HepG2 (cell line): ENCODE measurements at regions of chr12 and their contacts with region 1.

Region 1: DNA sequence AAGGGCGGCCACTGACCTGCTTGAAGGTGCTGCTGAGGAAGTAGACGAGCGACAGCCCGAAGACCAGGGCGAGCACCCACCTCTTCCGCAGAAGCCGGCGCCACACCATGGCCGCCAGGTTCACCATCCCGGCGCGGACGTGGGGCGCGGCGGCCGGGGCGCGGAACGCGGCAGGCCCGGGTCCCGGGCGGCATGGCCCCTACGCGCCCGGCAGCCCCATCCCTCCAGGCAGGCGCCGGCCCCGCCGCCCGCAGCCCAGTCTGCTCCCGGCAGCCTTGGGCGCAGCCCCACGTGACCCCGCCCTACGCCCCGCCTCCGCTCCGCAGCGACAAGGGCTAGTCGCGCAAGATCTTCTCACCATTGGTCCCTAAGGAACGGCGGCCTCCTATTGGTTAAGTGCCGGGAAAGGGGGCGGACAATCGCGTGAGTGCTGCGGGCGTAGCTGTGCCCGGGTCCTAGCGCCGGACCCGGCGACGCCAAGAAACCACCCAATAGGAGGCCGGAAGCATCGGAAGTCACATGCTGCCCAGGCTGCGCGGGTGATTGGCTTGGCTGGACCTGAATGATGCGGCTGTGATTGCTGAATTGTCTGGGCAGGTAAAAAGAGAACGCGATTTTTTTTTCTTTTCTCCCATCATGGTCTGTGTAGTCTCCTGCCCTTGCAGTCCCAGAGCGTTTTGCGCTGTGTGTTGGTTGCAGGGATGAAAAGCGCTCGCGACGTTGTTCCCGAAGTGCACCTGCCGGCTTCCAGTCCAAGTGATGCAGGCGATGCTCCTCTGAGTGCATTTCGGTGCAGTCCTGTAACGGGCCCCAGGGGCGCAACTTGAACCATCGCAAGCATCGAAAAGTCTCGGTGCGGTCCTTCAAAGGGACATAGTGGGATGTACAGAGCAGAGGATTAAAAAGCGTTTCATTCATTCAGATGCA is at the starts of genes RNFT2 and SPRING1:
- DNase-seq: peak; percentile 98
- ATAC-seq: peak; percentile 95
- H3K4me3 ChIP-seq: peak within 1 kb of the TSS; percentile 76 to 97 (median 89)
- H3K27ac ChIP-seq: peak within 1 kb of the TSS; percentile 63
- H3K4me1 ChIP-seq: peaks cover 44% of the 10 kb centered on the region
- H3K27me3 ChIP-seq: no peaks in the 10 kb centered on the region; a peak in 1 of 5 replicates
- CTCF ChIP-seq: no peak
- EP300 ChIP-seq: no peak
- POLR2A ChIP-seq: peak; percentile 64 to 80; a peak in 3 of 4 replicates
- RAD21 ChIP-seq: peak; percentile 58
- total RNA-seq, gene RNFT2: 7.1 and 8.3 TPM in 2 replicates
- total RNA-seq, gene SPRING1: 51.8 and 65.6 TPM in 2 replicates

Region 2: DNA sequence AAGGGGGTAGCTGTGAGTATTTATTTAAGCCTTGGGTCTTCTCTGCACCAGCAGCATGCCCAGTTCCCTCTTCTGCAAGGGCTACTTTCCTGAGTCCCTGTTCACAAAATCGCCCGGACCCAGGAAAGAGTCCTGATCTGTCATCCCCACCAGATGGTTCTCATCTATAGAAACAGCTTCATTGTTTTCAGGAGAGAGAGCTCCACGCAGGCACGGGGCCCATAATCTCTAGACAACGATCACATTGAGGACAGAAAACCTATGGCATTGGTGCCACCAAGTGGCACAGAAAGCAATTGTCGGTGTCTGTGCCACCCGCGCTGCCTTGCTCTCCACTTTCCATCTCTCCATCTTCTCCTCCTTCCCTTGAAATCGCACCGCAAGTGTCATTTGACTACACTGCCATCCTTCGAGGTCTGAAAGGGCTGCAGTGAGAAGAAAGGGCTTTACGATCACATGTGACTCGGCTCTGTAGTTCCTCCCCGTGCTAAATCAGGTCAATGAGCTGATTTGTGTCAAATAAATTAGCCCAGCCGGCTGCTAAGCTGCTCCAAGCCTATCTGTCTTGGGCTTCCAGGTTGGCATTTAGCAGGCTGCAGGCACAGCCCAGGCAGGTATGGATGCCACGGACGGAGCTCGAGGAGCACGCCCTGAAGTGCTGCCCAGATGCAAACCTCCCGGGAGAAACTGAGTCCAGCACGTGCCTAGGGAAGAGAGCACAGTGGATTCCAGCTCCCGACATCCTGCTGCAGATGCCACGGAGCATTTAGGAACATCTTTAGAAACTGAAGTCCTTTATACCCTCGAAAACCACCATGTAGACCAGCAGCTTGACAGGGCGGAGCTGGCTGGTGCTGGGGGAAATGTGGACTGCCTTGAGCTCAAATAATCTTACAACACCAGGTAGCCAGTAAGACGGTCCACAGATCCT is 28.9 kb before region 1 on chr12:
- CTCF ChIA-PET with region 1: no interaction called
- POLR2A ChIA-PET with region 1: no interaction called
- in situ Hi-C with region 1: no loop called
- intact Hi-C with region 1: no loop called
- DNase-seq: peak; percentile 25
- ATAC-seq: peak; percentile 72
- H3K4me3 ChIP-seq: peak overlapping the region in 1 of 3 experiments; percentile 10; a peak in 2 of 6 replicates
- H3K27ac ChIP-seq: no peak overlapping the region
- H3K4me1 ChIP-seq: peaks cover 11% of the 10 kb centered on the region
- H3K27me3 ChIP-seq: no peaks in the 10 kb centered on the region; a peak in 1 of 5 replicates
- CTCF ChIP-seq: peak; percentile 72
- EP300 ChIP-seq: no peak
- POLR2A ChIP-seq: no peak
- RAD21 ChIP-seq: 0 out of 2 replicates have a peak, but pooled peaks have one; percentile 22

Region 3: GRCh38 chr12:116818948-116819832 is 81.2 kb after region 1 on chr12:
- CTCF ChIA-PET with region 1: no interaction called
- POLR2A ChIA-PET with region 1: interaction called, 3 read pairs
- in situ Hi-C with region 1: no loop called
- intact Hi-C with region 1: loop called (anchors 1 kb)
- DNase-seq: peak; percentile 79
- ATAC-seq: peak; percentile 91
- H3K4me3 ChIP-seq: peak overlapping the region; percentile 81 to 90 (median 88)
- H3K27ac ChIP-seq: peak overlapping the region; percentile 74
- H3K4me1 ChIP-seq: peaks cover 10% of the 10 kb centered on the region
- H3K27me3 ChIP-seq: no peaks in the 10 kb centered on the region; a peak in 1 of 5 replicates
- CTCF ChIP-seq: no peak
- EP300 ChIP-seq: no peak
- POLR2A ChIP-seq: peak; percentile 41 to 78; a peak in 3 of 4 replicates
- RAD21 ChIP-seq: peak; percentile 43; the same call in 1 of the 2 replicates

Region 4: DNA sequence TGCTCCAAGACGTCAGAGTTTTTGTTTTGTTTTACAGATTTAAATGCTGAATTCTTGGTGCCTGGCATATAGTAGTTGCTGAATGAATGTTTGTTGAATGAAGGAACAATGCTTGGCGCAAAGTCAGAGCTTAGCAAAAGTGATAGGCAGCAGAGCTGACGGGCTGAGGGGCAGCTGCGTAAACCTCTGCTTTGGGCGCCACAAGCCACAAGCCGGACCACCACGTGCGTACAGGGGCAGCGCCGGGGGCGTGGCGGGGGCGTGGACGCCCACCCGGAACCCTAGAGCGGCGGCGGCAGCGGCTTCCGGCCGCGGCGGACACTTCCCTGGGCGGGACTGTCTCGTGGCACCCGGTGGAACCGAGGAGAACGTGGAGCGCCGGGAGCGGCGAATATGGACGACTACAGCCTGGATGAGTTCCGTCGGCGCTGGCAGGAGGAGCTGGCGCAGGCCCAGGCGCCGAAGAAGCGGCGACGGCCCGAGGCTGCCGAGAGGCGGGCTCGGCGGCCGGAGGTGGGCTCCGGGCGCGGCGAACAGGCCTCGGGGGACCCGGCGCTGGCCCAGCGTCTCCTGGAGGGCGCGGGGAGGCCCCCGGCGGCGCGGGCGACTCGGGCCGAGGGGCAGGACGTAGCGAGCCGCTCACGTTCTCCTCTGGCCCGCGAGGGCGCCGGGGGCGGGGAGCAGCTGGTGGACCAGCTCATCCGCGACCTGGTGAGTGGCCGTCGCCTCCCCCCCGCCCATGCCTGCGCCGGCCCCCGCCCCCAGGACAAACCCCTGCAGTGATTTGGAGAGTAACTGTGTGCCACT is 172.8 kb after region 1 on chr12 and contains the start of gene FBXW8:
- CTCF ChIA-PET with region 1: no interaction called
- POLR2A ChIA-PET with region 1: interaction called, 4 read pairs
- in situ Hi-C with region 1: no loop called
- intact Hi-C with region 1: loop called (anchors 10 kb)
- DNase-seq: peak; percentile 61
- ATAC-seq: peak; percentile 90
- H3K4me3 ChIP-seq: peak within 1 kb of the TSS; percentile 66 to 88 (median 78)
- H3K27ac ChIP-seq: peak within 1 kb of the TSS; percentile 79
- H3K4me1 ChIP-seq: peaks cover 32% of the 10 kb centered on the region
- H3K27me3 ChIP-seq: no peaks in the 10 kb centered on the region
- CTCF ChIP-seq: no peak
- EP300 ChIP-seq: no peak
- POLR2A ChIP-seq: peak; percentile 79
- RAD21 ChIP-seq: peak; percentile 68; the same call in 1 of the 2 replicates
- total RNA-seq, gene FBXW8: 5.9 and 6.4 TPM in 2 replicates

Region 5: GRCh38 chr12:117090816-117091711 is 353.0 kb after region 1 on chr12:
- CTCF ChIA-PET with region 1: no interaction called
- POLR2A ChIA-PET with region 1: no interaction called
- in situ Hi-C with region 1: no loop called
- intact Hi-C with region 1: loop called (anchors 1 kb)
- DNase-seq: peak; percentile 94
- ATAC-seq: peak; percentile 93
- H3K4me3 ChIP-seq: peak overlapping the region in 1 of 3 experiments; percentile 52; a peak in 2 of 6 replicates
- H3K27ac ChIP-seq: peak overlapping the region; percentile 82
- H3K4me1 ChIP-seq: peaks cover 100% of the 10 kb centered on the region
- H3K27me3 ChIP-seq: no peaks in the 10 kb centered on the region
- CTCF ChIP-seq: no peak
- EP300 ChIP-seq: peak in 1 of 2 experiments; percentile 75; a peak in 2 of 4 replicates
- POLR2A ChIP-seq: peak; percentile 49 to 50; a peak in 3 of 4 replicates
- RAD21 ChIP-seq: no peak